ENCODE measurements at regions of chr11 and their contacts with region 1.

Region 1: DNA sequence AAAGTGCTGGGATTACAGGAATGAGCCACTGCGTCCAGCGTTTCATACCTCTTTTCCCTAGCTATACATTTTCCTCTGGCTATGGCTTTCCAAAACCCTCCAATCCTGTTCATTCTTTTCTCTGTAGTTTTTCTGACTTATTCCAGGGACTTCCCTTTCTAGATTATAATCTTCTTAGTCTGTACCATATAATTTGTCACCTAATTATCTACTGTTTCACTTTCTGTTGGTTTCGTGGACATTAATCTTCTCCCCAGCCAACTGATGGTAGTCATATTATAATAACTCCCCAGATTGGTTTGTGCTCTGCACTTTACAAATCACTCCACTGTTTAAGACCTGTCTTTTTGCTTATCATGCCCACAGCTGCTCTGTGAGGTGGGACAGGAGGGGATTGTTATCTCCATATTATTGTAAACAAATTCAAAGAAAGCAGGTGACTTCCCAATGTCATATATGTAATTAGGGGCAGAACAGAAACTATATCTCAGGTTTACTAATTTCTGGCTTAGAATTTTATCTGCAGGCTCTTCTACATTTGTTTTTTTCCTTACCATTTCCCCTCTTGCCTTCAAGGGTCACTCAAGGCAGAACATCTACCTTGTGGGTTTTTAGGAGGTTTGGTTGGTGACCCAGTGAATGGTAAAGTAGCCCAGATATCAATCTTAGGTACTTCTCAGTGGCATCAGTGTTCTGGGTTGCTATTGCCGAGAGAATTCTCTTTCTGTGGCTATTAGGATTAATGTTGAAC is 23.9 kb downstream of the STIM1 start:
- DNase-seq: peak; percentile 34
- CTCF ChIP-seq: no peak

Region 2: GRCh38 chr11:3867209-3868091 is 11.9 kb before region 1 on chr11:
- CTCF ChIA-PET with region 1: interaction called, 422 read pairs
- POLR2A ChIA-PET with region 1: no interaction called
- DNase-seq: no peak
- CTCF ChIP-seq: no peak

Region 3: DNA sequence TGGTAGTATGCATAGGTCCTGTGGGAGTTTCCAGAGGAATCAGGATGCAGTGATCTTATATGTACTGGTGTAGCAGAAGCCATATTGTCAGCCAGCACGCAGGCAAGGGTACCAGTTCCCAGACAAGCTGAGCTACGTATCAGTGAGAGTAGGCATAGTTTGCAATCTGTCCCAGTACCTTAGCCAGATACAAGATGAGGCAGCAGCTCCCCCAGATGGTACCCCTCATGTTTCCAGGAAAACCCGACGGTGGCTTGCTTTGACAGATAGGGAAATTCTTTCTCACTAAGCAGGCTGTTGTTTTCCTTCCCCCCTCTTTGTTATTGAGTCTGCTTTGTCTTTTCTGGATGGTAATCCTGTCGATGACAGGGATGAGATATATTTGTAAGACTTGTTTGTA is 105.5 kb after region 1 on chr11:
- CTCF ChIA-PET with region 1: no interaction called
- POLR2A ChIA-PET with region 1: no interaction called
- DNase-seq: no peak
- CTCF ChIP-seq: no peak

Measured in GM10248 (cell line).